Activated CD4-positive, alpha-beta memory T cell treated with anti-CD3 and anti-CD28 coated beads for 36 hours (primary cell): ENCODE measurements at regions of chr19 and their contacts with region 1.

Region 1: DNA sequence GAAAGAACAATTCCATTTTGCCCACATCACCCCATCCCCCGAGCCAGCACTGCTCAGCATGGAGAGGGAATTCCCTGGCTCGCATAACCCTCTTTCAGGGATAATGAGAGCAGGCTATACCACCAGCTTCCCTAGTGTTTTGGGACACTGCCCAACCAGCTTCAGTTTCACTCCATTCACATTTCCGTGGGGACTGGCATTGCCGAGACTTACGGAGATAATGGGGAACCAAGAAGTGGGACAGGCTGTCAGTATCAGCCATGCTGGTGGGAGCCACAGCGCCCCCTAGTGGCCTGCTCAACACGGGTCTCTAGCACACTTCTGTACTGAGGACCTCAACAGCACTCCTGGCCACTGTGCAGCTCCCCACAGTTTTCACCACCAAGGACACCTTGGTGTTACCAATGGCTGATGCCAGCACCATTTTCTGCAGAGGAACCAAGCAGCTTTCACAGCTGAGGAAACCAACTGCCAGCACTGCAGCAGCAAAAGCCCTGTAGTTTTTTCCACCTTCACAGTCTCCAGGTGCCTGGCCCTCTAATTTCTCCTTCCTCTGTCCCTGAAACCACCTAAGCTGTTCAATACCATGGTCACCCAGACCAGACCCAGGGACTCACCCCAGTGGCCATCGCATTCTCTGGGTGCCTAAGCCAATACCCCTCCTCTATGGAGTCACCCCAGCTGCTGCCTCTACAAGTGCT is 23.7 kb downstream of the SLC6A16 start:
- DNase-seq: peak; percentile 88
- H3K4me3 Mint-ChIP-seq: no peak overlapping the region
- H3K27ac Mint-ChIP-seq: no peak overlapping the region
- H3K4me1 Mint-ChIP-seq: no peaks in the 10 kb centered on the region
- H3K27me3 Mint-ChIP-seq: no peaks in the 10 kb centered on the region

Region 2: GRCh38 chr19:49264258-49264657 is 37.1 kb before region 1 on chr19:
- CTCF ChIA-PET with region 1: interaction called, 47 read pairs
- POLR2A ChIA-PET with region 1: no interaction called
- intact Hi-C with region 1: loop called (anchors 2 kb)
- DNase-seq: no peak
- H3K4me3 Mint-ChIP-seq: no peak overlapping the region
- H3K27ac Mint-ChIP-seq: no peak overlapping the region
- H3K4me1 Mint-ChIP-seq: no peaks in the 10 kb centered on the region
- H3K27me3 Mint-ChIP-seq: peaks cover 9% of the 10 kb centered on the region

Region 3: GRCh38 chr19:49282184-49282583 is 19.1 kb before region 1 on chr19:
- CTCF ChIA-PET with region 1: interaction called, 11 read pairs
- POLR2A ChIA-PET with region 1: no interaction called
- intact Hi-C with region 1: no loop called
- DNase-seq: no peak
- H3K4me3 Mint-ChIP-seq: no peak overlapping the region
- H3K27ac Mint-ChIP-seq: no peak overlapping the region
- H3K4me1 Mint-ChIP-seq: no peaks in the 10 kb centered on the region
- H3K27me3 Mint-ChIP-seq: peaks cover 8% of the 10 kb centered on the region

Region 4: DNA sequence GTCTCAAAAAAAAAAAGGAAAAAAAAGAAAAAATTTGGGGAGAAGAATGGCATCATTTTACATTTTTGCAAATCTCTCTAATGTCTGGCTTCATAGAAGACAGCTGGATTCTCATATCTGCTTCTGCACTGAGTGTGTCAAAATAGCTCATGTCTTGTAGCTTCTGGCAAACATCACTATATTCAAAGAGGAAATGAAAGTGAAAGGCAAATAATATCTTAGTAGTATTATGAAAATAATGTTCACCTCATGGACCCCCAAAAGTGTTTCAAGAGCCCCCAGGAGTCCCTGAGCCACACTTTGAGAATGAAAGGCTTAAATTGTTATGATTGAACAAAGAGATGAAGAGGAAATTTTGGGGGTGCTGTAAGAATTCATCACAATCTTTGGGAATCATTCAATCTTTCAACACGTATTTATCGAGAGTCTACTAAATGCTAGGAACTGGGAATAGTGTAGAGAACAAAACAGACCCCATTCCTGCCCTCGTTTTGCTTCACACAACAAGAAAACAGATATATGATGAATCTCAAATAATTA is 24.9 kb after region 1 on chr19:
- CTCF ChIA-PET with region 1: interaction called, 40 read pairs
- POLR2A ChIA-PET with region 1: no interaction called
- intact Hi-C with region 1: no loop called
- DNase-seq: no peak
- H3K4me3 Mint-ChIP-seq: no peak overlapping the region
- H3K27ac Mint-ChIP-seq: no peak overlapping the region
- H3K4me1 Mint-ChIP-seq: peaks cover 30% of the 10 kb centered on the region
- H3K27me3 Mint-ChIP-seq: no peaks in the 10 kb centered on the region